GM13977 (cell line): ENCODE measurements at regions of chr9 and their contacts with region 1.

Region 1: GRCh38 chr9:119289740-119290433 is 79.3 kb downstream of the BRINP1 start:
- DNase-seq: peak; percentile 58
- CTCF ChIP-seq: peak; percentile 82

Region 2: GRCh38 chr9:117782931-117783788 is 1506.7 kb before region 1 on chr9:
- in situ Hi-C with region 1: loop called (anchors 25 kb)
- DNase-seq: peak; percentile 8
- CTCF ChIP-seq: peak; percentile 73